Panc1 (cell line): ENCODE measurements at regions of chr15 and their contacts with region 1.

Region 1: DNA sequence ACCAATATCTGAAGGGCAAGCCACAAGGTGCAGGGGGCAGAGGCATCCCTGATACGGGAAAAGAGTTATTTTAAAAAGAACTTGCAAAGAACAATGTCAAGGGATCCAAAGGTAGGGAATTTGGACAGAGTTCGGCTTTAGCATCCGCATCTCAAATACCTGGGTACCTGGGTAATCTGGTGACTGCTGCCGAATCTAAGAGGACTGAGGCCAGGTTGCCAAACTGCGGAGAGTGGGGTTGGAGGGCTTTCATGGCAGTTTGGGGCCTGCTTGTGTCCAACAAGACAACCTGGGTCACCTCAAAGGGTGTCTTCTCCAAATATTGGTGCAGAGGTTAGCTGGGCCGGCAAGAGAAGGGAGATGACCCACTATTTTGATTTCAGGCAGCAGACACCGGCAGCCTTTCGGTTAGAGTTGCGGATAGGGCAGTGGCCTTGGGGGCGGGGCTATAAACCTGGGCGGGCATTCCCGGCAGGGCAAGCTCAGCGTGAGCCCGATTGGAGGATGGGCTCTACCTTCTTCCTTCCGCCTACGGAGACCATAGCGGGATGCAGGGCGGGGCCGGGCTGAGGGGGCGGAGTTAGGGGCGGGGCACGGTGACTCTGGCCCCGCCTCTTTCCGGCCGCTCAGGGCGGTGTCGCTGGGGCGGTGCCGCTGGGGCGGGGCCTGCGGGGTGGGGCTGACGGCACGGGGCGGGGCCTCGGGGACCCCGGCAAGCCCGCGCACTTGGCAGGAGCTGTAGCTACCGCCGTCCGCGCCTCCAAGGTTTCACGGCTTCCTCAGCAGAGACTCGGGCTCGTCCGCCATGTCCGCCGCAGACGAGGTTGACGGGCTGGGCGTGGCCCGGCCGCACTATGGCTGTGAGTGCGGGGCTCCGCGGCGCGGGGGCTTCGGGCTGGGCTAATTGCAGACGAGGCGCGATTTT is at the start of gene IQGAP1:
- DNase-seq: peak; percentile 80
- ATAC-seq: peak; percentile 97
- H3K4me3 ChIP-seq: peak within 1 kb of the TSS; percentile 82 to 85
- H3K27ac ChIP-seq: peak within 1 kb of the TSS; percentile 96
- H3K4me1 ChIP-seq: peaks cover 24% of the 10 kb centered on the region
- H3K27me3 ChIP-seq: no peaks in the 10 kb centered on the region
- CTCF ChIP-seq: no peak
- total RNA-seq, gene IQGAP1: 228 TPM

Region 2: DNA sequence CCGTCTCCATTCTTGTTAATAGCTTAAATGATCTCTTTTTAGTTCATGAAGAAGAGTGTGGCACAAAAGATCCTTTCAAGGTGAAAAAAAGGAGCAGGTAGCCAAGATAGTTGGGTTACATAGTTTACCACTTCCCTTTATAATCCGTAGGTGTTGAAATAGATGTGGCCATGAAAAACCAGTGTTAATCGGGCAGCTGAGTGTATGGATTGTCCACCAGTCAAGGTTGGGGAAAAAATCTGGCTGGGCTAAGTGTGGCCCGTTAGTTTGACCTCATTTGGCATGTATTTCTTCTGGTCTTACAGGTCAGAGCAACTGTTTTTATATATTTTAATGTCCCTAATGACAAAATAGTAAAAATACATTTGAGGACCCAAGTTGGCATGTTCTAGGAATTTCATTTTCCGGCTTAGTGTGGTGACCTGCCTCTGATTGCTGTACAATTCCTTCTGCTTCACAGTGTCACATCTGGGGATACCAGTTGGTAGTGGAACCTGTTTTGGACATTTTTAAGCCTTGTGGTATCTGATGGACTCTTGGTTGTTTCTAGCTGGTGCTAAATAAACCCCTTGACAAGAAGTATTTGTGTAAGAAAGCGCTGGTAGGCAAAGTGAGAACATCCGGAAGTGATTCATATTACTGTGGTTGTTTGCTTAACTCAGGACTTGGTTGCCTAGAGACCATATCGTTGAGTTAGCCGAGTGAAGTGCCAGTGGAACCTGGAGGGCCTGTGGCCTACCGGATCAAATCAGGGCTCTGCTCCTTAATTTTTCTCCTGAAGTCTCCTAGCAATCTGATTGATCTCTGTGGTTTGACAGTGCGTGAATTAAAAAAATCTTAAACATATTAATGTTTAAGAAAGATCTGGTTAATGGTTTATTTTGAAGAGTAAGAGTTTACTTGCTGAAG is 12.9 kb after region 1 on chr15:
- CTCF ChIA-PET with region 1: no interaction called
- POLR2A ChIA-PET with region 1: interaction called, 12 read pairs
- in situ Hi-C with region 1: no loop called
- intact Hi-C with region 1: no loop called
- DNase-seq: peak; percentile 93
- ATAC-seq: peak; percentile 96
- H3K4me3 ChIP-seq: peak overlapping the region; percentile 21 to 46
- H3K27ac ChIP-seq: peak overlapping the region; percentile 98
- H3K4me1 ChIP-seq: peaks cover 74% of the 10 kb centered on the region
- H3K27me3 ChIP-seq: no peaks in the 10 kb centered on the region
- CTCF ChIP-seq: no peak

Region 3: GRCh38 chr15:90667073-90667754 is 279.4 kb after region 1 on chr15:
- CTCF ChIA-PET with region 1: no interaction called
- POLR2A ChIA-PET with region 1: interaction called, 16 read pairs
- in situ Hi-C with region 1: no loop called
- intact Hi-C with region 1: no loop called
- DNase-seq: no peak
- ATAC-seq: no peak
- H3K4me3 ChIP-seq: no peak overlapping the region
- H3K27ac ChIP-seq: no peak overlapping the region
- H3K4me1 ChIP-seq: no peaks in the 10 kb centered on the region
- H3K27me3 ChIP-seq: no peaks in the 10 kb centered on the region
- CTCF ChIP-seq: no peak